ENCODE measurements at regions of chr2 and their contacts with region 1.

Region 1: DNA sequence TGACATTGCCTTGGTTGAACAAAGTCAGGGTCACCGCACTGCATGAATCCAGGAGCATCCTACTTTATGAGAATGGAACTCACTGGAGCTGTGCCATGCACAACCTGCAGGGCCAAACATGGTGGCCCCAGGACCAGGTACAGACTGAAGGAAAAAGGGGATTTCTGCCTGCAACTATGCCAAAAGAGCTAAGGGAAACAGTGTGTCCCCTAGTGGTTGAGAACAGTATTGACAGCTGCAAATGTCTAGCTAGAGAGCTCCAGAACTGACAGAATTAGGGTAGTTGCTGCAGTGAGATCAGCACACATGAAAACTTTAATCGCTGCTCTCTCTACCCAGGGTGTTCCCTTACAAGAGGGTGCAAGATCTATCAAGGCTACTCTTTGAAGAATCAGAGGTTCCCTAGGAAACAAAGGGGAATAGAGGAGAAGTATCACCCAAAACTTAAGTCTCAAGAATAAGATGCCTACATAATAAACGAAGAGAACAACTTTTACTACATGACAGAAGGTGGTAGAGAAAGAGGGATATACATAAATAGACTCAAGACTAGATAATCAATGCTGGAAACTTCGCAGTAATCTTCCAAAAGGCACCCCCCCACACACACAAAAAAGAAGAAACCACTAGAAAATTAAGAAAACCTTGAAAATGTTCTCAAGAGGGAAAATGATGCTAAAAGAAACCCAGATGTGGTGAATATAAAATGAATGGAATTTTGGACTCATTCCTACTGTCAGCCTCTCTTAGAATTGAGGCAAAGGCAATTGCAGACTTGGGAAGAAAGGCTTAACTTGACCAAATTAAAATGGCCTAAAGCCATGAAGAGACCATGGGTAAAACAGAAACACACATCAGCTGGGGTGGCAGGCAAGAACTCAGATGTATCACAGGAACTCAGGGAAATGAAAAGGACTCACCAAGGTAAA is 43.6 kb upstream of the IHH start:
- DNase-seq: no peak
- ATAC-seq: peak; percentile 57
- H3K4me3 Mint-ChIP-seq: no peak overlapping the region
- H3K27ac Mint-ChIP-seq: no peak overlapping the region
- H3K4me1 Mint-ChIP-seq: peaks cover 3% of the 10 kb centered on the region
- H3K27me3 Mint-ChIP-seq: no peaks in the 10 kb centered on the region

Region 2: GRCh38 chr2:218860950-218861381 is 243.4 kb before region 1 on chr2:
- CTCF ChIA-PET with region 1: no interaction called
- DNase-seq: no peak
- ATAC-seq: no peak
- H3K4me3 Mint-ChIP-seq: no peak overlapping the region
- H3K27ac Mint-ChIP-seq: no peak overlapping the region
- H3K4me1 Mint-ChIP-seq: peaks cover 10% of the 10 kb centered on the region
- H3K27me3 Mint-ChIP-seq: peaks cover 74% of the 10 kb centered on the region

Region 3: DNA sequence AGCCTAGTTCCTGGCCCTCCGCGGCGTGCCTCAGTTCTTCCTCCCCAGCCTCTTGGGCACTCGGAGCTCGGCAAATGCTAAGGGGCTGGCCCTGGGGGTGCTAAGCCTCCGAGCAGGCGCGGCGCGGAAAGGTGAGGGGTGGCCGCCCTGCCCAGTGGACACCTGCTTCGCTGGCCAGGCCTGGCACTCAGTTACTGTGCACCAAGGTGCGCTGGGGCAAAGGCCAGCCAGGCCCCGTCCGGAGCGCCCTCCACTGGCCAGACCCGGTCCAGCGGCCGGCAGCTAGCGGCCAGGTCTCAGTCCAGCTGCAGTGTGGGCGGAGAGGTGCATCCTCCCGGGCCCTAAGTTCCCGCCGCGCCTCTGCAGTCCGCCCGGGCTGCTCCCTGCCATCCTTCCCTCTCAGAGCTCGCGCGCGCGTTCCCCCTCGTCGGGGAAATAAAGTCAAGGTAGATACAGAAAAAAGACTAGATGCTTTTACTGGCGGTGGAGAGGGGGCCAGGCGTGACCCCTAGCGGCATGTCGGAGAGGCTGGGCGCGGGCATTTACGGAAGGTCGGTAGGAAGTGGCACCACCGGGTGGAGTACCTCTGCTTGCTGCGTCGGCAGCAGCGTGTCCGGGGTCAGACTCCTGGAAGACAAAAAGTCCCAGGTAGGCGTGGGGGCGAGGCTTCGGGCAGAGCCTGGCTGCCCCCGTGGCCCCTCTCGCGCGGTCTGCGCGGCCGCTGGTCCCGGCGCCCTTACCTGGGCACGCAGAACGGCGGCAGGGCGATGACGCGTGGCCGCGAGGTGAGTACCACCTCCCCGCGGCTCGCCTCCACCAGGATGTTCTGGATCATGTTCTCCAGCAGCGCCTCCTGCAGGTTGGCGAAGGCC is 101.7 kb before region 1 on chr2:
- CTCF ChIA-PET with region 1: no interaction called
- DNase-seq: peak; percentile 56
- ATAC-seq: no peak
- H3K4me3 Mint-ChIP-seq: no peak overlapping the region
- H3K27ac Mint-ChIP-seq: no peak overlapping the region
- H3K4me1 Mint-ChIP-seq: peaks cover 6% of the 10 kb centered on the region
- H3K27me3 Mint-ChIP-seq: peaks cover 74% of the 10 kb centered on the region

Region 4: GRCh38 chr2:219087361-219087760 is 17.0 kb before region 1 on chr2:
- CTCF ChIA-PET with region 1: interaction called, 17 read pairs
- DNase-seq: no peak
- ATAC-seq: no peak
- H3K4me3 Mint-ChIP-seq: no peak overlapping the region
- H3K27ac Mint-ChIP-seq: no peak overlapping the region
- H3K4me1 Mint-ChIP-seq: peaks cover 16% of the 10 kb centered on the region
- H3K27me3 Mint-ChIP-seq: no peaks in the 10 kb centered on the region

Region 5: DNA sequence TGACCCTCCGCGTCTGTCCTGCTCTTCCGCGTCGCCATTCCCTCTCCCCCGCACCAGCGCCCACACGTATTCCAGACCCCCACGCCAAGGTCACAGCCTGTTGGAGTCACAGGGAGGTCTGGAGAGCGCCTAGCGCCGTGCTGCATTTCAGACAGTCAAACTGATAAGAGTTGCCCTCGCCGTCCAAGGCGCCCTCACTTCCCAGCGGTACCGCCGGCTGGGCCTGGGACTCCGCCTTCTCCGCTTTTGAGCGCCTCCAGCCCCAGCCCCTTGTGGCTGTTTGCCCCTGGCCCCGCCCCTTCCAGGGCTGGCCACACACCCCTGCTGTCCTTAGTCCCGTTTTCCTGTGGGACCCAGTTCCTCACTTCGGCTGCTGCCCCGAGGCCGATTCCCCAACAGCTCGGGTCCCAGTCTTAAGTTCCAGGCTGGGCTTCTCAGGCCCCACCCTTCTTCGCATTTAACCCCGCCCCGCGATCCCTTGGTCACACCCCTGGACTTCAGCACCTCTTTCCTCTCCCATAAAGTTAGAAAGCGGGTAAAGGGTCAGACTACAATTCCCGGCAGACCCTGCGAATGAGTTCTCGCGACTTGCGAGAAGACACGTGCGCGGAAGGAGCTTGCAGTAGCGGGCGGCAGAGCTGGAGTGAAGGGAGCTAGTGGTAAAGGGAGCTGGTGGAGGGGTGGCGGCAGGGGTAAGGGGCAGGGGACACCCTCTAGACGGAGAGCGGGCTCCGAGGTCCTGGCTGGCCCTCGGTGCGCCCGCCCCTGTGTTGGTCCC is 394.1 kb after region 1 on chr2 and contains the start of gene GMPPA:
- CTCF ChIA-PET with region 1: no interaction called
- DNase-seq: peak; percentile 98
- ATAC-seq: peak; percentile 94
- H3K4me3 Mint-ChIP-seq: peak within 1 kb of the TSS; percentile 87
- H3K27ac Mint-ChIP-seq: peak within 1 kb of the TSS; percentile 78
- H3K4me1 Mint-ChIP-seq: peaks cover 31% of the 10 kb centered on the region
- H3K27me3 Mint-ChIP-seq: peaks cover 40% of the 10 kb centered on the region
- total RNA-seq, gene GMPPA: 36.5 to 42.6 TPM

Measured in activated CD8-positive, alpha-beta memory T cell treated with anti-CD3 and anti-CD28 coated beads, Interleukin-2, amount 10 ng/mL, durations not matched to agents 7 days and 5 days (primary cell).